ENCODE measurements at regions of chr2 and their contacts with region 1.

Region 1: GRCh38 chr2:96174251-96175144 is 29.3 kb upstream of the DUSP2 start:
- DNase-seq: peak; percentile 72 to 75
- ATAC-seq: peak; percentile 97 to 99
- H3K4me3 ChIP-seq: no peak overlapping the region
- H3K27ac ChIP-seq: no peak overlapping the region
- H3K4me1 ChIP-seq: no peaks in the 10 kb centered on the region
- CTCF ChIP-seq: peak; percentile 83
- EP300 ChIP-seq: no peak
- POLR2A ChIP-seq: no peak
- RAD21 ChIP-seq: peak; percentile 86 to 88

Region 2: GRCh38 chr2:96024336-96025193 is 149.9 kb before region 1 on chr2:
- CTCF ChIA-PET with region 1: interaction called, 19 read pairs
- POLR2A ChIA-PET with region 1: no interaction called
- DNase-seq: no peak
- ATAC-seq: no peak
- H3K4me3 ChIP-seq: no peak overlapping the region
- H3K27ac ChIP-seq: no peak overlapping the region
- H3K4me1 ChIP-seq: no peaks in the 10 kb centered on the region
- CTCF ChIP-seq: no peak
- EP300 ChIP-seq: no peak
- POLR2A ChIP-seq: no peak
- RAD21 ChIP-seq: no peak

Region 3: GRCh38 chr2:96148410-96149217 is 25.9 kb before region 1 on chr2:
- CTCF ChIA-PET with region 1: interaction called, 14 read pairs
- POLR2A ChIA-PET with region 1: no interaction called
- DNase-seq: peak; percentile 25 to 78
- ATAC-seq: peak; percentile 73 to 78
- H3K4me3 ChIP-seq: no peak overlapping the region
- H3K27ac ChIP-seq: peak overlapping the region in 1 of 2 experiments; percentile 57; a peak in 2 of 6 replicates
- H3K4me1 ChIP-seq: peaks cover 10% of the 10 kb centered on the region; the same call in 2 of the 3 replicates
- CTCF ChIP-seq: no peak
- EP300 ChIP-seq: no peak
- POLR2A ChIP-seq: no peak
- RAD21 ChIP-seq: no peak

Region 4: GRCh38 chr2:96186562-96186961 is 12.1 kb after region 1 on chr2:
- CTCF ChIA-PET with region 1: interaction called, 30 read pairs
- POLR2A ChIA-PET with region 1: no interaction called
- DNase-seq: no peak
- ATAC-seq: no peak
- H3K4me3 ChIP-seq: no peak overlapping the region
- H3K27ac ChIP-seq: no peak overlapping the region
- H3K4me1 ChIP-seq: no peaks in the 10 kb centered on the region
- CTCF ChIP-seq: no peak
- EP300 ChIP-seq: no peak
- POLR2A ChIP-seq: no peak
- RAD21 ChIP-seq: no peak

Region 5: DNA sequence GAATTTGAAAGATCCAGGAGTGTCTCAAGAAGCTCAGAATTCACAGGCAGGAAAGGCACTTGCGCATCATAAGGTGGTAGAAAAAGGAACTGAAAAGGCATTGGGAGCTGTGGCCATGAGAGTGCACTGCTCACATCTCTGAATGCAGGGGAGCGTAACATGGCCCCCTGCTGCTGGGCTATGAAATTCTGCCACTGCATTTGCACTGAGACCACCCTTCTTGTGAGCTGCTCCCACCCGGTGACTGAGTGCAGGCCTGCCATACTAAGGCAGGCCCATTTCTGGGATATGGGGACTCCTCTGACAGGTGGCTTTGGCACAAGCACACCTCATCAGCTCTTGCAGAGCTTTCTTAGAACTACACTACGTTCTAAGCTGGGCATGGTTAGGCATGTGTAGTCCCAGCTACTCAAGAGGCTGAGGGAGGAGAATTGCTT is 59.4 kb after region 1 on chr2:
- CTCF ChIA-PET with region 1: interaction called, 12 read pairs
- POLR2A ChIA-PET with region 1: no interaction called
- DNase-seq: no peak
- ATAC-seq: no peak; a peak in 1 of 6 replicates
- H3K4me3 ChIP-seq: no peak overlapping the region
- H3K27ac ChIP-seq: no peak overlapping the region
- H3K4me1 ChIP-seq: no peaks in the 10 kb centered on the region
- CTCF ChIP-seq: no peak
- EP300 ChIP-seq: no peak
- POLR2A ChIP-seq: no peak
- RAD21 ChIP-seq: no peak

Measured in A549 (cell line).